CD4-positive, alpha-beta T cell (primary cell): ENCODE measurements at regions of chr13 and their contacts with region 1.

Region 1: DNA sequence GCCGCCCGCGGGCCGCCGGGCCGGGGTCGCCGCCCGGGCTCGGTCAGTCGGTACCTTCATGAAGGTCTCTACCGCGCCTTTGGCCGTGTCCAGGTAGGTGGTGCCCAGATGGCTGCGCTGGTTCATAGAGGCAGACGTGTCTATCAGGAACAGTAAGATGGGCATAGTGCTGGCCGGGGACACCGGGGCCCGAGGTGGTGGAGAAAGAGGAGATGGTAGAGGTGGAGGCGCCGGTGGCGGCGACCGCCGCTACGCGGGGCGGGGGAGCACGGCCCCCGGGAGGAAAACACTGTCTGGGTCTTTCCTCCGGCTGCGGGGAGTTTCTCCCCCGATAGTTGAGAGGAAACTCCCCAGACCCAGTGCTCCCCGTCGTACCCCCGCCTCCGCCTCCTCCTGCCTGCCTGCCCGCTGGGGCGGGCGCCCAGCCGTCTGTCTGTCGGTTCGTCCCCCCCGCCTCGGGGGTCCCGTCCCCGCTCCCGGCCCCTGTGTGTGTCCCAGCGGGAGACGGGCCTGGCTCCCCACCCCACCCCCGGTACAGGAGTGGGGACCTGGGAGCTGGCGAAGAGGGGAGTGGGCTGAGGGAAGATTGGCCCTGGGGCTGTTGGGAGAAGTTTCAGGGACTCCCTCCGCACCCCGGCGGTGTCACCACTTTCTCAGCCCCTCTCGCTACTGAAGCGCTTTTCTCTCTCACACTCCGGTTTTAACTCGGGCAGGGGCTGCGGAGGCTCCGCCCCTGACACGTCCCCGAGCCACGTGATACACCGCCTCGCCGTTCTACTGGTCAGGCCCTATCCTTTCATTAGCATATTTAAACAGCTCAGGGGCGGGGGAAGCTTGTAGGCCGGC is at the start of gene INTS6:
- DNase-seq: peak; percentile 73 to 100 (median 99)
- ATAC-seq: peak; percentile 83
- H3K4me3 ChIP-seq: peak within 1 kb of the TSS; percentile 88
- H3K4me3 Mint-ChIP-seq: peak within 1 kb of the TSS; percentile 96
- H3K27ac ChIP-seq: peak within 1 kb of the TSS; percentile 88 to 97
- H3K27ac Mint-ChIP-seq: peak within 1 kb of the TSS; percentile 95
- H3K4me1 ChIP-seq: peaks cover 30% of the 10 kb centered on the region
- H3K4me1 Mint-ChIP-seq: peaks cover 59% of the 10 kb centered on the region
- H3K27me3 ChIP-seq: no peaks in the 10 kb centered on the region
- H3K27me3 Mint-ChIP-seq: no peaks in the 10 kb centered on the region
- CTCF ChIP-seq: no peak
- total RNA-seq, gene INTS6: 40.8 to 45.8 TPM

Region 2: GRCh38 chr13:49792550-49793324 is 1659.8 kb before region 1 on chr13 and contains the start of gene KPNA3:
- CTCF ChIA-PET with region 1: no interaction called
- POLR2A ChIA-PET with region 1: interaction called, 12 read pairs
- intact Hi-C with region 1: loop called in 1 of 2 experiments (anchors 10 kb)
- DNase-seq: peak; percentile 90 to 98 (median 94)
- ATAC-seq: peak; percentile 89
- H3K4me3 ChIP-seq: peak within 1 kb of the TSS; percentile 84
- H3K4me3 Mint-ChIP-seq: peak within 1 kb of the TSS; percentile 100
- H3K27ac ChIP-seq: peak within 1 kb of the TSS; percentile 83 to 92
- H3K27ac Mint-ChIP-seq: peak within 1 kb of the TSS; percentile 95
- H3K4me1 ChIP-seq: peaks cover 22% of the 10 kb centered on the region
- H3K4me1 Mint-ChIP-seq: peaks cover 41% of the 10 kb centered on the region
- H3K27me3 ChIP-seq: no peaks in the 10 kb centered on the region
- H3K27me3 Mint-ChIP-seq: peaks cover 9% of the 10 kb centered on the region
- CTCF ChIP-seq: no peak
- total RNA-seq, gene KPNA3: 15.7 to 17.3 TPM

Region 3: DNA sequence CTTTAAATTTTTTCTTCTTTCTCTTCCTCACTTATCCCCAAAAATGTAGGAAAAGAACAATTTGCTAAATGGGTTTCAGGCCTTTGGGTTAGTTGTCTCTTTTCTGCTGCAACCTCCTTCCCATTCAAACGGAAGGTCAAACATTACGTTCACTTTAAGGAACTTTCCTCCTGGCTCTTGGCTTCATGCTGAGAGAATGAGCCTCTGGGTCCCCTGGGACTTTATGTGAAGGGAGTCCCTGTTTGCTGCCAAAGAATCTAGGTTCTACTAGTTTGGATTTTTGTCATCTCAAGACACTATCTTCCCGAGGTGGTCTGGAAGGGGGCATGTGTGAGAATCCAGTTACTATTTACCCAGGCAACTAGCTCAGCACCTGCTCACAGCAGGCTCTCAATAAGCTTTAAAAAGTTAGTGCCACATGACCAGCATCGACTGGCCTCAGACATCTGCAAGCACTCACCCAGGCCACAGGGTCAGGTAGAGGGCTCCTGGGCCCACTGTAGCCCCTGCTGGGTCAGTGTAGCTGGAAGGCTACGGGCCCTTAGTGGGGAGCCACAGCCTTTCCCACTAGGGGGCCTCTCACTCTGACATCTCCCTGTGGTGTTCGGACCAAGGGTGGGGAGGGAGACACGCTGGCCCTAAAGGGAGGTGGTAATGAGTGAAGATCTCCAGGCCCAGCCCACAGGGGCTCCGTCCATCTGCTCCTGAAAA is 189.9 kb before region 1 on chr13:
- CTCF ChIA-PET with region 1: no interaction called
- POLR2A ChIA-PET with region 1: no interaction called
- intact Hi-C with region 1: no loop called
- DNase-seq: no peak
- ATAC-seq: no peak
- H3K4me3 ChIP-seq: no peak overlapping the region
- H3K4me3 Mint-ChIP-seq: no peak overlapping the region
- H3K27ac ChIP-seq: no peak overlapping the region
- H3K27ac Mint-ChIP-seq: no peak overlapping the region
- H3K4me1 ChIP-seq: no peaks in the 10 kb centered on the region
- H3K4me1 Mint-ChIP-seq: no peaks in the 10 kb centered on the region
- H3K27me3 ChIP-seq: no peaks in the 10 kb centered on the region
- H3K27me3 Mint-ChIP-seq: no peaks in the 10 kb centered on the region
- CTCF ChIP-seq: no peak

Region 4: GRCh38 chr13:51420681-51421490 is 31.7 kb before region 1 on chr13:
- CTCF ChIA-PET with region 1: no interaction called
- POLR2A ChIA-PET with region 1: interaction called, 29 read pairs
- intact Hi-C with region 1: no loop called
- DNase-seq: peak in 4 of 14 experiments; percentile 11 to 34 (median 21)
- ATAC-seq: peak; percentile 54
- H3K4me3 ChIP-seq: peak overlapping the region; percentile 20
- H3K4me3 Mint-ChIP-seq: peak overlapping the region; percentile 46
- H3K27ac ChIP-seq: no peak overlapping the region
- H3K27ac Mint-ChIP-seq: peak overlapping the region; percentile 51
- H3K4me1 ChIP-seq: peaks cover 13% of the 10 kb centered on the region
- H3K4me1 Mint-ChIP-seq: peaks cover 84% of the 10 kb centered on the region
- H3K27me3 ChIP-seq: no peaks in the 10 kb centered on the region
- H3K27me3 Mint-ChIP-seq: no peaks in the 10 kb centered on the region
- CTCF ChIP-seq: no peak

Region 5: DNA sequence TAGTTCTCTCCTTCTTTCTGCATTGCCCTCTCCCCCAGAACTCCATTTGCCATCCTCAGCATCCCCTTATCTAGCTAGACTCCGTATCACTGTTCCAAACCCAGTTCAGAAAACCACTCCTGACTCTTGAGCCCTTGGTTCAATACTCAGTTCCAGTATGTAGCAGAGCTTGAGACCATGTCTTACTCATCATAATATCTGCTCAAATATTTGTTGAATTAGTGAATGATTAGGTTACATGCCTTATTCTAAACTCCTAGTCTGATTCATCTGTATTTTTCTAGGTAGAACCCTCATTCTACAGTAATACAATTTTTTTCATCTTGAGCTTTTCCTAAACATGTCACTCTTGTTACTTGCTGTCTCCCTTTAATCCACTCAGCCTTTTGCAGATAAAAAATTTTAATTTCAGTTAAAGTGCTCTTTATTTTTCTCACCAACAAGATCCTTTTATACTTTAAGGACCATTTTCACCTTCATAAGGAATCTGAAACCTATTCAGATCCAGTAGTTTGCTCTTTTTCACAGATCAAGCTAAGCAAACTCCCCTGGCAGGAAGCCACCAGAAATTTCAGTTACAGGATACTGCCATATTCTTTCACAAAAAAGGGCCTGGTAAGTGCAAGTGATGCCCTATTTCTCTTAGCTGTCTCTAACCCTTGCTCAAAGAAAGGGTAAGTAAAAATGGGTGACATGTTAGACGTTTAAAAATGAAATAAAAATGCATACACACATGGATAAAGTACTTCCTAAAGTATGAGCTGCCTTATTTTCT is 23.3 kb after region 1 on chr13:
- CTCF ChIA-PET with region 1: interaction called, 5 read pairs
- POLR2A ChIA-PET with region 1: interaction called, 18 read pairs
- intact Hi-C with region 1: no loop called
- DNase-seq: no peak
- ATAC-seq: no peak
- H3K4me3 ChIP-seq: no peak overlapping the region
- H3K4me3 Mint-ChIP-seq: no peak overlapping the region
- H3K27ac ChIP-seq: no peak overlapping the region
- H3K27ac Mint-ChIP-seq: no peak overlapping the region
- H3K4me1 ChIP-seq: no peaks in the 10 kb centered on the region
- H3K4me1 Mint-ChIP-seq: peaks cover 5% of the 10 kb centered on the region
- H3K27me3 ChIP-seq: no peaks in the 10 kb centered on the region
- H3K27me3 Mint-ChIP-seq: no peaks in the 10 kb centered on the region
- CTCF ChIP-seq: no peak

Region 6: GRCh38 chr13:51614350-51614786 is 161.8 kb after region 1 on chr13:
- CTCF ChIA-PET with region 1: no interaction called
- POLR2A ChIA-PET with region 1: interaction called, 47 read pairs
- intact Hi-C with region 1: no loop called
- DNase-seq: peak; percentile 7 to 75 (median 26)
- ATAC-seq: peak; percentile 96
- H3K4me3 ChIP-seq: peak overlapping the region; percentile 42
- H3K4me3 Mint-ChIP-seq: peak overlapping the region; percentile 89
- H3K27ac ChIP-seq: peak overlapping the region; percentile 34 to 78
- H3K27ac Mint-ChIP-seq: peak overlapping the region; percentile 89
- H3K4me1 ChIP-seq: peaks cover 5% of the 10 kb centered on the region
- H3K4me1 Mint-ChIP-seq: peaks cover 23% of the 10 kb centered on the region
- H3K27me3 ChIP-seq: no peaks in the 10 kb centered on the region
- H3K27me3 Mint-ChIP-seq: no peaks in the 10 kb centered on the region
- CTCF ChIP-seq: no peak

Region 7: GRCh38 chr13:51803422-51804294 is 351.1 kb after region 1 on chr13 and contains the start of gene DHRS12:
- CTCF ChIA-PET with region 1: no interaction called
- POLR2A ChIA-PET with region 1: interaction called, 135 read pairs
- intact Hi-C with region 1: loop called (anchors 1 kb)
- DNase-seq: peak; percentile 75 to 97 (median 82)
- ATAC-seq: peak; percentile 73
- H3K4me3 ChIP-seq: peak within 1 kb of the TSS; percentile 81
- H3K4me3 Mint-ChIP-seq: peak within 1 kb of the TSS; percentile 97
- H3K27ac ChIP-seq: peak within 1 kb of the TSS; percentile 99
- H3K27ac Mint-ChIP-seq: peak within 1 kb of the TSS; percentile 99
- H3K4me1 ChIP-seq: peaks cover 58% of the 10 kb centered on the region
- H3K4me1 Mint-ChIP-seq: peaks cover 61% of the 10 kb centered on the region
- H3K27me3 ChIP-seq: no peaks in the 10 kb centered on the region
- H3K27me3 Mint-ChIP-seq: no peaks in the 10 kb centered on the region
- CTCF ChIP-seq: no peak
- total RNA-seq, gene DHRS12: 10.0 to 14.8 TPM

Region 8: DNA sequence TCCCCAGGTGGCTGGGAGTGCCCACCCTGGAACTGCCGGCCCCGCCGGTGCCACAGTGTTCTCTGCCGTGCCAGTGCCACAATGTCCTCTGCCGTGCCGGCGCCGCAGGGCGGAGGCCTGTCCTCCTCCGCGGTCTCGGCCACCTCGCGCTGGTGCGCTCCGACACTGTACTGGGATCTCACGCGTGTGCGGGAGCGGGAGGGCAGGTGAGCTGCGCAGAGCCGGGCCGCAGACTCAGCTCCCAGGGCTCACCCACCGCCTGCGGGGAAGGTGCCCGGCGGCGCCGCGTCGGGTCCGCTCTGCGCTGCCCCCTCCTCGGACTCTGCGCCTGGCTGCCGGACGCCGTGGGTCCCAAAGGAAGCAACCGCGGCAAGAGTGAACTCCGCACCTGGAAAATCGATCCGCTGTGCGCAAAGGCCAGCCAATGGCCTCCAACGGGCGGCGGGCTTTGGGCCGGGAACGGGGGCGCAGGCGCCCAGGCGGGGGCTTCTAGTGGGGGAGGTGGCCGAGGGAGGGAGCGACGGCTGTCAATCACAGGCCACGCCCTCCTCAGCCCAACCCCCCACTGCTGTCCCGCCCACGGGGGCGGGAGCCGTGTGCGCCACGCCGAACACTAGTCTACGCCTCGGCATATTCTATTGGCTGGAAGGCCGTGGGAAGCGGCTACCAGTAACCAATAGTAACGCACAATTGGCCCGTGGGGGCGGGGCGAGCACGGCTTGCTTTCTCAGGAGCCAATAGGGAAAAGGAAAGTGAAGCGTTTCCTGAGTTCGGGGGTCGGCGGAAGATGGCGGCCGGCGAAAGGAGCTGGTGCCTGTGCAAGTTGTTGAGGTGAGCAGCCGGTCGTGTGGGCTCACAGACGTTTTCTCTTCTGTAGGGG is 559.3 kb after region 1 on chr13 and contains the start of gene ALG11:
- CTCF ChIA-PET with region 1: no interaction called
- POLR2A ChIA-PET with region 1: interaction called, 9 read pairs
- intact Hi-C with region 1: loop called in 1 of 2 experiments (anchors 2 kb)
- DNase-seq: peak; percentile 99 to 100 (median 99)
- ATAC-seq: peak; percentile 98
- H3K4me3 ChIP-seq: peak within 1 kb of the TSS; percentile 93
- H3K4me3 Mint-ChIP-seq: peak within 1 kb of the TSS; percentile 92
- H3K27ac ChIP-seq: peak within 1 kb of the TSS in 1 of 2 donors; percentile 56
- H3K27ac Mint-ChIP-seq: peak within 1 kb of the TSS; percentile 84
- H3K4me1 ChIP-seq: peaks cover 9% of the 10 kb centered on the region
- H3K4me1 Mint-ChIP-seq: peaks cover 24% of the 10 kb centered on the region
- H3K27me3 ChIP-seq: peaks cover 2 to 24% of the 10 kb centered on the region in 2 experiments
- H3K27me3 Mint-ChIP-seq: peaks cover 12% of the 10 kb centered on the region
- CTCF ChIP-seq: no peak
- total RNA-seq, gene ALG11: 25.8 to 29.8 TPM

Region 9: GRCh38 chr13:53276265-53276664 is 1823.7 kb after region 1 on chr13:
- CTCF ChIA-PET with region 1: no interaction called
- POLR2A ChIA-PET with region 1: no interaction called
- intact Hi-C with region 1: no loop called
- DNase-seq: no peak
- ATAC-seq: no peak
- H3K4me3 ChIP-seq: no peak overlapping the region
- H3K4me3 Mint-ChIP-seq: no peak overlapping the region
- H3K27ac ChIP-seq: no peak overlapping the region
- H3K27ac Mint-ChIP-seq: no peak overlapping the region
- H3K4me1 ChIP-seq: no peaks in the 10 kb centered on the region
- H3K4me1 Mint-ChIP-seq: no peaks in the 10 kb centered on the region
- H3K27me3 ChIP-seq: no peaks in the 10 kb centered on the region
- H3K27me3 Mint-ChIP-seq: no peaks in the 10 kb centered on the region
- CTCF ChIP-seq: no peak